Activated CD8-positive, alpha-beta memory T cell treated with anti-CD3 and anti-CD28 coated beads, Interleukin-2, amount 10 ng/mL, durations not matched to agents 7 days and 5 days (primary cell): ENCODE measurements at regions of chr20 and their contacts with region 1.

Region 1: DNA sequence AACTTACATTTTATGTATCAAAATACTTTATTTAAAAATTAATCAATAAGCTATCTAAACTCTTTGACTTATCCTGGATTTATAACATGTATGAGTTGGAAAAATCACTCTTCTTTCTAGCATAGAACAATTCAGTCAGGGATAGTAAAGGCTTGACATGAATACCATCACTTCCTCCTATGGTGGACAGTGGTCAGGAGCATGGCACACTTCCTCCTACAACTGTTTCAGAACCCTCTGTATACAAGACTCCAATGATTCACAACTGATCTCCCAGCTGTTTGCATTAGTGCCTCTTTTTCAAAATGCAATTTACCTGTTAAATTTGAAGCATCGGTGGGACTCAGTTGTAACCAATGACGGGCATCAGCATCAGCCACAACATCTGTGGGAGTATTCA is 129.7 kb downstream of the RALGAPA2 start:
- DNase-seq: no peak
- ATAC-seq: no peak
- H3K4me3 Mint-ChIP-seq: no peak overlapping the region
- H3K27ac Mint-ChIP-seq: no peak overlapping the region
- H3K4me1 Mint-ChIP-seq: peaks cover 3% of the 10 kb centered on the region
- H3K27me3 Mint-ChIP-seq: no peaks in the 10 kb centered on the region

Region 2: GRCh38 chr20:20593447-20594170 is 10.9 kb after region 1 on chr20:
- CTCF ChIA-PET with region 1: interaction called, 17 read pairs
- DNase-seq: no peak
- ATAC-seq: no peak
- H3K4me3 Mint-ChIP-seq: no peak overlapping the region
- H3K27ac Mint-ChIP-seq: no peak overlapping the region
- H3K4me1 Mint-ChIP-seq: no peaks in the 10 kb centered on the region
- H3K27me3 Mint-ChIP-seq: no peaks in the 10 kb centered on the region

Region 3: GRCh38 chr20:20734475-20734948 is 151.8 kb after region 1 on chr20:
- CTCF ChIA-PET with region 1: no interaction called
- DNase-seq: peak; percentile 44
- ATAC-seq: no peak
- H3K4me3 Mint-ChIP-seq: no peak overlapping the region
- H3K27ac Mint-ChIP-seq: no peak overlapping the region
- H3K4me1 Mint-ChIP-seq: peaks cover 9% of the 10 kb centered on the region
- H3K27me3 Mint-ChIP-seq: peaks cover 8% of the 10 kb centered on the region